Activated naive CD4-positive, alpha-beta T cell treated with anti-CD3 and anti-CD28 coated beads for 36 hours (primary cell): ENCODE measurements at regions of chr15 and their contacts with region 1.

Region 1: GRCh38 chr15:66907826-66908743 is 157.3 kb upstream of the SMAD3 start:
- DNase-seq: no peak
- H3K4me3 Mint-ChIP-seq: no peak overlapping the region
- H3K27ac Mint-ChIP-seq: no peak overlapping the region
- H3K4me1 Mint-ChIP-seq: peaks cover 18% of the 10 kb centered on the region
- H3K27me3 Mint-ChIP-seq: no peaks in the 10 kb centered on the region

Region 2: DNA sequence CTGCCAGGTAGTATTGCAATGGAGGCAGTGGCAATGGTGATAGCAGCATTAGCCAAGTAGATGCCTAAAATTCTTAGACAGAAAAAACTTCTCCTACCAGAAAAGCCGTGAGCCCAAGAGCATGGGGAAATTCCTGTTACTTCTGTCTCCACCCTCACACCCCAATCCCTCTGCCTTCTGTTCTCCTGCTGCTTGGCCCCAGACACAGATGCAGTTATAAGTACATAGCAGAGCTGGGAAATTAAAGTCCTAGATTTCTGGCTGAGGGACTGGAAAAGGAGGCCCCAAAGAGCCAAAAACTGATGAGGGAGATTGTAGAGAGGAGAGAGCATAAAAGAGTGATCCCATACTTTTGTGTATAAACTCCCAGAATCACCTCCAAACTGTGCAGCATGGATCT is 39.2 kb before region 1 on chr15:
- CTCF ChIA-PET with region 1: no interaction called
- intact Hi-C with region 1: no loop called
- DNase-seq: no peak
- H3K4me3 Mint-ChIP-seq: no peak overlapping the region
- H3K27ac Mint-ChIP-seq: no peak overlapping the region
- H3K4me1 Mint-ChIP-seq: no peaks in the 10 kb centered on the region
- H3K27me3 Mint-ChIP-seq: peaks cover 19% of the 10 kb centered on the region

Region 3: GRCh38 chr15:66966257-66966656 is 58.2 kb after region 1 on chr15:
- CTCF ChIA-PET with region 1: no interaction called
- intact Hi-C with region 1: no loop called
- DNase-seq: no peak
- H3K4me3 Mint-ChIP-seq: no peak overlapping the region
- H3K27ac Mint-ChIP-seq: no peak overlapping the region
- H3K4me1 Mint-ChIP-seq: no peaks in the 10 kb centered on the region
- H3K27me3 Mint-ChIP-seq: no peaks in the 10 kb centered on the region

Region 4: DNA sequence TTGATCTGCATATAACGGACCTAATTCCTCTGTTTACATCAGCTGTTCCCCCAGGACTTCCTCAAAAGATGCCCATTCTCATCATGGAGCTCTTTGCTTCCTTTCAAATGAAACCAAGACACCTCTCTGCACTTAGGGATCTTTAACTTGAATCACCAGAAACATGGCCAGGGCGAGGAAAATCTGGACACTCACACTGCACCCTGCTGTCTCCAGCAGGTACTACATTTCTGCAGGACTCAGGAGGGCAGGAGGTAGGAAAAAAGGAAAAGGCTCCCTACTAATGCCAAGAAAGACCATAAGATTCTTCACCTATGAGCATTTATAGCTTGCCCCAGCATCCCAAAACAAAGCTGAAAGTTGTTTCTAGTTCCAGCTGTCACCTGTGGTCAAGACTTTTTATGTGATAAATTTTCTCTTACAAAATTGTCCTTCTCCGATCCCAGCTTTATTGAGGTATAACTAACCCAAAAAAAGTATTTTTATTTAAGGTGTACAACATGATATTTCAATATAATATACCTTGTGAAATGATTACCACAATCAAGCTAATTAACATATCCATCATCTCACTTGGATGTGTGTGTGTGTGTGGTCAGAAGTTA is 525.5 kb after region 1 on chr15:
- CTCF ChIA-PET with region 1: no interaction called
- intact Hi-C with region 1: loop called (anchors 1 kb)
- DNase-seq: peak; percentile 51
- H3K4me3 Mint-ChIP-seq: no peak overlapping the region
- H3K27ac Mint-ChIP-seq: no peak overlapping the region
- H3K4me1 Mint-ChIP-seq: no peaks in the 10 kb centered on the region
- H3K27me3 Mint-ChIP-seq: no peaks in the 10 kb centered on the region